ENCODE measurements at regions of chr1 and their contacts with region 1.

Region 1: GRCh38 chr1:109643385-109644230 is 12.3 kb upstream of the GSTM4 start:
- DNase-seq: peak; percentile 74 to 99
- H3K4me3 ChIP-seq: no peak overlapping the region
- H3K27ac ChIP-seq: no peak overlapping the region
- H3K4me1 ChIP-seq: no peaks in the 10 kb centered on the region; a peak in 1 of 7 replicates
- H3K27me3 ChIP-seq: no peaks in the 10 kb centered on the region; a peak in 2 of 7 replicates
- CTCF ChIP-seq: peak; percentile 83 to 98 (median 92)
- EP300 ChIP-seq: 0 out of 3 replicates have a peak, but pooled peaks of 1 of the 2 experiments have one; percentile 12
- POLR2A ChIP-seq: no peak
- RAD21 ChIP-seq: peak; percentile 89 to 92

Region 2: GRCh38 chr1:109454497-109455133 is 189.0 kb before region 1 on chr1:
- CTCF ChIA-PET with region 1: no interaction called
- POLR2A ChIA-PET with region 1: no interaction called
- DNase-seq: no peak
- H3K4me3 ChIP-seq: no peak overlapping the region
- H3K27ac ChIP-seq: no peak overlapping the region
- H3K4me1 ChIP-seq: no peaks in the 10 kb centered on the region
- H3K27me3 ChIP-seq: no peaks in the 10 kb centered on the region
- CTCF ChIP-seq: no peak
- EP300 ChIP-seq: no peak
- POLR2A ChIP-seq: no peak
- RAD21 ChIP-seq: no peak

Region 3: GRCh38 chr1:109537450-109538178 is 106.0 kb before region 1 on chr1:
- CTCF ChIA-PET with region 1: interaction called, 17 read pairs
- POLR2A ChIA-PET with region 1: no interaction called
- DNase-seq: peak in 1 of 2 experiments; percentile 41
- H3K4me3 ChIP-seq: no peak overlapping the region
- H3K27ac ChIP-seq: no peak overlapping the region
- H3K4me1 ChIP-seq: peaks cover 0 to 5% (median 1%) of the 10 kb centered on the region in 4 experiments; a peak in 4 of 7 replicates
- H3K27me3 ChIP-seq: peaks cover 0 to 2% (median 0%) of the 10 kb centered on the region in 4 experiments; a peak in 1 of 7 replicates
- CTCF ChIP-seq: no peak
- EP300 ChIP-seq: no peak
- POLR2A ChIP-seq: no peak
- RAD21 ChIP-seq: no peak

Region 4: DNA sequence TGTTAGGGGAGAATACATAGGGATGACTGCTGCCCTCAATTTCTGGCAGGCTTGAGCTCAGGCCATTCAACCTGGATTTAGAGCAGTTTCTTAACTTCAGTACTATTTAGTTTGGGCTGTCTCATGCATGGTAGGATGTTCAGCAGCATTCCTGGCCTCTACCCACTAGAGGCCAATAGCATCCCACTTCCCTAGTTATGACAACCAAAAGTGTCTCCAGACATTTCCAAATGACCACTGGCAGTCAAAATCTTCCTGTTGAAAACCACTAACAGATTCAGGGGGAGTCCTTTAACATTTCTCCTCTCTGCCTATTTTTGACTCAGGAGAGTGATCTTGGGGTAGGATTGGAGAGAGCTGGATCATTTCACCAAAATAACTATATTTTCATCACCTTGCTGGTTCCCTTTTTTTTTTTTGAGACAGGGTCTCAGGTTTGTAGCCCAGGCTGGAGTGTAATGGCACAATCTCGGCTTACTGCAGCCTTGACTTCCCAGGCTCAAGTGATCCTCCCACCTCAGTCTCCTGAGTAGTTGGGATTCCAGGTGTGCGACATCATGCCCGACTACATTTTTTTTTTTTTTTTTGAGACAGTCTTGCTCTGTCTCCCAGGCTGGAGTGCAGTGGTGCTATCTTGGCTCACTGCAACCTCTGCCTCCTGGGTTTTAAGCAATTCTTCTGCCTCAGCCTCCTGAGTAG is 32.9 kb before region 1 on chr1:
- CTCF ChIA-PET with region 1: interaction called, 13 read pairs
- POLR2A ChIA-PET with region 1: no interaction called
- DNase-seq: no peak
- H3K4me3 ChIP-seq: no peak overlapping the region
- H3K27ac ChIP-seq: no peak overlapping the region
- H3K4me1 ChIP-seq: no peaks in the 10 kb centered on the region
- H3K27me3 ChIP-seq: no peaks in the 10 kb centered on the region
- CTCF ChIP-seq: no peak
- EP300 ChIP-seq: no peak
- POLR2A ChIP-seq: no peak
- RAD21 ChIP-seq: no peak

Region 5: DNA sequence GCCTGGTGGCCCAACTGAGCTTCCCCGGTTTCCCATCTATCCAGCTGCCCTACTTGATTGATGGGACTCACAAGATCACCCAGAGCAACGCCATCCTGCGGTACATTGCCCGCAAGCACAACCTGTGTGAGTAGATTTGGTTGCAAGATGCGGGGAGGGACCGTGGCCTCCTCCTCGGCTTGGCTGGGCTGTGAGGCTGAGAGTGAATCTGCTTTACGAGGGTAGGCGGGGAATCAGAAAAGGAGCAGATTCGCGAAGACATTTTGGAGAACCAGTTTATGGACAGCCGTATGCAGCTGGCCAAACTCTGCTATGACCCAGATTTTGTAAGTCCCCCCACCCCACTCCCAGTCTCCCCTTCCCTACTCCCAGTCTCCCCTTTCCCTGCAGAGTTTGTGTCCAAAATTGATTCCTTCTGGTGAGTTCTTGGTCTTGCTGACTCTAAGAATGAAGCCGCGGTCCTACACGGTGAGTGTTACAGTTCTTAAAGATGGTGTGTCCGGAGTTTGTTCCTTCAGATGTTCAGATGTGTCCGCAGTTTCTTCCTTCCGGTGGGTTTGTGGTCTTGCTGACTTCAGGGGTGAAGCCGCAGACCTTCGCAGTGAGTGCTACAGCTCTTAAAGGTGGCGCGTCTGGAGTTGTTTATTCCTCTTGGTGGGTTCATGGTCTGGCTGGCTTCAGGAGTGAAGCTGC is 25.8 kb after region 1 on chr1:
- CTCF ChIA-PET with region 1: interaction called, 13 read pairs
- POLR2A ChIA-PET with region 1: no interaction called
- DNase-seq: no peak
- H3K4me3 ChIP-seq: no peak overlapping the region
- H3K27ac ChIP-seq: no peak overlapping the region
- H3K4me1 ChIP-seq: peaks cover 0 to 6% (median 5%) of the 10 kb centered on the region in 4 experiments; a peak in 5 of 7 replicates
- H3K27me3 ChIP-seq: no peaks in the 10 kb centered on the region
- CTCF ChIP-seq: no peak
- EP300 ChIP-seq: no peak
- POLR2A ChIP-seq: no peak
- RAD21 ChIP-seq: no peak

Region 6: DNA sequence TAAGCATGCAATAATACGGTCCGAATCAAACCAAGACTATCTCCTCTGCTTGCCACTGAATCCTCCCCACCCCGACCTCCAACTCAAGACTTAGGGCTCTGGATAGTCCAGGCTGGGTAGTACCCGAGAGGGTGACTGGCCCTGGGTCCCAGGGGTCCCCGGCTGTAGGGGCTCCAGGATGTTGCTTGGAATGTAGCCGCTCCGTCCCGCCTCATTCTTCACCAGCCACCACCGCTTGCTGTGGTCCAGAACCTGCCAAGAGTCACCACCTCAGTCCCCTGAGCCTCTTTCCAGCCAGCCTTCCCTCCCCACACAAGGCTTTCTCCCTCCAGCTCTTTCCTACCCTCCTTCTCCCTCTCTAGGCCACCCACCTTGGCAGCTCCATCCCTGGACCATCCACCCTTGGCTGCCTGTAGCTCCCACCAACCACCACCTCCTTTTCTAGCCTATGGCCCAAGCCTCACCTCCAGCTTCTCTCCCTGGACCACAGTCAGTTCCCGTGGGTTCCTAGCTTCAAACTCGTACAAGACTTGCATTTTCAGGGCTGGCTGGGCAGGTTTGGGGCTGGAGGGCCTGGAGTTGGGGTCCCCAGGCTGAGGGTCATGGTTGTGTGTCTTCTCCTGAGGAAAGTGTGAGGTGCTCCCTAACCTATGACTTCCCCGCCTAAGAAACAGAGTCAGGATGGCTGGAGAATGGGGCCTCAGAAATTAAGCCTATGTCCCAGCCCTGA is 108.1 kb after region 1 on chr1:
- CTCF ChIA-PET with region 1: interaction called, 13 read pairs
- POLR2A ChIA-PET with region 1: no interaction called
- DNase-seq: no peak
- H3K4me3 ChIP-seq: no peak overlapping the region
- H3K27ac ChIP-seq: no peak overlapping the region
- H3K4me1 ChIP-seq: no peaks in the 10 kb centered on the region
- H3K27me3 ChIP-seq: no peaks in the 10 kb centered on the region
- CTCF ChIP-seq: no peak
- EP300 ChIP-seq: no peak
- POLR2A ChIP-seq: no peak
- RAD21 ChIP-seq: no peak

Region 7: DNA sequence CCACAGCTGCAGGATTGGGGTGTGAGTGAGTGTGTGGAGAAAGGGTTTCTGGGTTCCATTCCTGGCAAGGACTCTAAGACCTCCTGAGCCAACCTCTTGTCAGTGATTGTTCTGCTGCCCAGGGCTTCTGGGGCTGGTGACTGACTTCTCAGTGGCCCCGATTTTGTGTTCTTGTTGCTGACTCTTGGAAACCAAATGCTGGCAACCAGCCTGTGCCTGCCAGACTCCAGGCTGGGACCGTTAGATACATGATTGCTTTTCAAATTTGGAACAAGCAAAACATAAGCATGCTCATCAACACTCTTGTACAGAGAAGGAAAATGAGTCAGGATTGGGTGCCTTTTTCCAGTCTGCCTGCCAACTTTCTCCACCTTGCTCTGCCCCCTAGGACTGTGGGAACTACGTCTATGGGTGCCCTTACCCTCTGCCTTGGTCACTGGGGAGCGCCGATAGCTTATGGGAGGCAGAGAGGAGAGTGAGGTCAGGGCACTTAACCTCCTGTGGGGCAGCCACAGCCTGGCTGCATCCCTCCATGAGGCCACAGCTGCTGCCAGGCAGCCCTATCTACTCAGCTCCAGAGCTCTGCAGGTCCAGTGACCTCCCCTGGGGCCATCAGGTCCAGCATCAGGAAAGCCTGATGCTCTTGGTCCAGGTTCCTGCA is 159.4 kb after region 1 on chr1:
- CTCF ChIA-PET with region 1: interaction called, 11 read pairs
- POLR2A ChIA-PET with region 1: no interaction called
- DNase-seq: no peak
- H3K4me3 ChIP-seq: no peak overlapping the region
- H3K27ac ChIP-seq: no peak overlapping the region
- H3K4me1 ChIP-seq: no peaks in the 10 kb centered on the region
- H3K27me3 ChIP-seq: no peaks in the 10 kb centered on the region
- CTCF ChIP-seq: no peak
- EP300 ChIP-seq: no peak
- POLR2A ChIP-seq: no peak
- RAD21 ChIP-seq: no peak

Region 8: GRCh38 chr1:110118636-110119615 is 475.3 kb after region 1 on chr1:
- CTCF ChIA-PET with region 1: no interaction called
- POLR2A ChIA-PET with region 1: no interaction called
- DNase-seq: no peak
- H3K4me3 ChIP-seq: no peak overlapping the region
- H3K27ac ChIP-seq: no peak overlapping the region
- H3K4me1 ChIP-seq: no peaks in the 10 kb centered on the region; a peak in 1 of 7 replicates
- H3K27me3 ChIP-seq: no peaks in the 10 kb centered on the region
- CTCF ChIP-seq: no peak
- EP300 ChIP-seq: no peak
- POLR2A ChIP-seq: no peak
- RAD21 ChIP-seq: no peak

Measured in H1 (cell line).